ENCODE measurements at regions of chr5 and their contacts with region 1.

Region 1: GRCh38 chr5:104297076-104297475 is 734.5 kb upstream of the NUDT12 start:
- DNase-seq: no peak
- H3K4me3 ChIP-seq: no peak overlapping the region
- H3K4me3 Mint-ChIP-seq: no peak overlapping the region
- H3K27ac ChIP-seq: no peak overlapping the region
- H3K27ac Mint-ChIP-seq: no peak overlapping the region
- H3K4me1 ChIP-seq: no peaks in the 10 kb centered on the region
- H3K4me1 Mint-ChIP-seq: no peaks in the 10 kb centered on the region
- H3K27me3 ChIP-seq: no peaks in the 10 kb centered on the region
- H3K27me3 Mint-ChIP-seq: no peaks in the 10 kb centered on the region

Region 2: GRCh38 chr5:105849701-105850100 is 1552.6 kb after region 1 on chr5:
- CTCF ChIA-PET with region 1: no interaction called
- POLR2A ChIA-PET with region 1: no interaction called
- intact Hi-C with region 1: loop called (anchors 5 kb)
- DNase-seq: no peak
- H3K4me3 ChIP-seq: no peak overlapping the region
- H3K4me3 Mint-ChIP-seq: no peak overlapping the region
- H3K27ac ChIP-seq: no peak overlapping the region
- H3K27ac Mint-ChIP-seq: no peak overlapping the region
- H3K4me1 ChIP-seq: no peaks in the 10 kb centered on the region
- H3K4me1 Mint-ChIP-seq: no peaks in the 10 kb centered on the region
- H3K27me3 ChIP-seq: no peaks in the 10 kb centered on the region
- H3K27me3 Mint-ChIP-seq: no peaks in the 10 kb centered on the region